Dendritic cell treated with granulocyte-macrophage colony-stimulating factor and Interleukin-4, amounts not matched to agents 40 ng/mL and 50 ng/mL, for 4 days (primary cell): ENCODE measurements at regions of chr15 and their contacts with region 1.

Region 1: GRCh38 chr15:72473614-72474465 is at the start of gene ARIH1:
- H3K4me3 Mint-ChIP-seq: peak within 1 kb of the TSS; percentile 96
- H3K27ac Mint-ChIP-seq: peak within 1 kb of the TSS; percentile 99
- H3K4me1 Mint-ChIP-seq: peaks cover 40% of the 10 kb centered on the region
- H3K27me3 Mint-ChIP-seq: no peaks in the 10 kb centered on the region

Region 2: DNA sequence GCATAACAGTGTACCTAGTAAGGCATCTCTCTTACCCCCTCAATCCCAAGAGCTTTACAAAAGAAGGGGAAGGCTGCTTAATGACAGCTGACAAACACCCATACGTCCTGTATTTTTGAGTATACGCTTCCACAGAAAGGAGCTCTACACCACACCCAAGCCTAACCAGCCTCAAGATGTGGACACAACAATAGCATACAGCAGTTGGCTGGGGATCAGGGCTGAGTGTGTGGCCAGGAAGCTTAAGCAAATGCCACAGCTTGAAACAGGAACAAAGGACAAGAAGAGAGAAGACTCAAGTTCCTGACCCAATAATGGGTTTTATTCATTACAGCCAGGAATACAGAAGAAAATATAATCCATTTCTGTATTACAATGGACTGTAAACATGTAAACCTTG is 104.9 kb before region 1 on chr15:
- intact Hi-C with region 1: loop called (anchors 2 kb)
- H3K4me3 Mint-ChIP-seq: peak overlapping the region; percentile 57
- H3K27ac Mint-ChIP-seq: peak overlapping the region; percentile 62
- H3K4me1 Mint-ChIP-seq: peaks cover 71% of the 10 kb centered on the region
- H3K27me3 Mint-ChIP-seq: no peaks in the 10 kb centered on the region

Region 3: GRCh38 chr15:72559781-72560180 is 85.9 kb after region 1 on chr15:
- intact Hi-C with region 1: loop called (anchors 10 kb)
- H3K4me3 Mint-ChIP-seq: no peak overlapping the region
- H3K27ac Mint-ChIP-seq: no peak overlapping the region
- H3K4me1 Mint-ChIP-seq: peaks cover 52% of the 10 kb centered on the region
- H3K27me3 Mint-ChIP-seq: no peaks in the 10 kb centered on the region